Breast epithelium (tissue), 4 donors: ENCODE measurements at regions of chr5 and their contacts with region 1.

Region 1: GRCh38 chr5:3068401-3068800 is 316.9 kb upstream of the IRX2 start:
- DNase-seq: no peak
- H3K4me3 ChIP-seq: no peak overlapping the region
- H3K27ac ChIP-seq: no peak overlapping the region
- H3K4me1 ChIP-seq: no peaks in the 10 kb centered on the region
- H3K27me3 ChIP-seq: no peaks in the 10 kb centered on the region
- CTCF ChIP-seq: no peak
- POLR2A ChIP-seq: no peak

Region 2: GRCh38 chr5:2883771-2884170 is 184.6 kb before region 1 on chr5:
- intact Hi-C with region 1: loop called (anchors 5 kb)
- DNase-seq: no peak
- H3K4me3 ChIP-seq: no peak overlapping the region
- H3K27ac ChIP-seq: no peak overlapping the region
- H3K4me1 ChIP-seq: no peaks in the 10 kb centered on the region
- H3K27me3 ChIP-seq: no peaks in the 10 kb centered on the region
- CTCF ChIP-seq: no peak
- POLR2A ChIP-seq: no peak